HepG2 (cell line): ENCODE measurements at regions of chr3 and their contacts with region 1.

Region 1: GRCh38 chr3:155805802-155806618 is at the start of gene C3orf33:
- DNase-seq: peak; percentile 30
- ATAC-seq: peak; percentile 93
- H3K4me3 ChIP-seq: peak within 1 kb of the TSS; percentile 87 to 95 (median 94)
- H3K27ac ChIP-seq: peak within 1 kb of the TSS; percentile 89
- H3K4me1 ChIP-seq: peaks cover 18% of the 10 kb centered on the region
- H3K27me3 ChIP-seq: no peaks in the 10 kb centered on the region
- CTCF ChIP-seq: peak; percentile 89
- EP300 ChIP-seq: peak in 1 of 2 experiments; percentile 3; a peak in 1 of 4 replicates
- POLR2A ChIP-seq: peak; percentile 5 to 44; a peak in 1 of 4 replicates
- RAD21 ChIP-seq: peak; percentile 86
- total RNA-seq, gene C3orf33: 8.2 and 12.6 TPM in 2 replicates

Region 2: GRCh38 chr3:155270485-155271342 is 535.3 kb before region 1 on chr3:
- CTCF ChIA-PET with region 1: no interaction called
- POLR2A ChIA-PET with region 1: no interaction called
- in situ Hi-C with region 1: no loop called
- intact Hi-C with region 1: no loop called
- DNase-seq: no peak
- ATAC-seq: no peak
- H3K4me3 ChIP-seq: no peak overlapping the region
- H3K27ac ChIP-seq: no peak overlapping the region
- H3K4me1 ChIP-seq: no peaks in the 10 kb centered on the region
- H3K27me3 ChIP-seq: no peaks in the 10 kb centered on the region
- CTCF ChIP-seq: no peak
- EP300 ChIP-seq: no peak
- POLR2A ChIP-seq: no peak
- RAD21 ChIP-seq: no peak

Region 3: GRCh38 chr3:155737844-155738460 is 68.1 kb before region 1 on chr3:
- CTCF ChIA-PET with region 1: no interaction called
- POLR2A ChIA-PET with region 1: interaction called, 10 read pairs
- in situ Hi-C with region 1: no loop called
- intact Hi-C with region 1: no loop called
- DNase-seq: peak; percentile 90
- ATAC-seq: peak; percentile 99
- H3K4me3 ChIP-seq: peak overlapping the region; percentile 51 to 60 (median 52)
- H3K27ac ChIP-seq: peak overlapping the region; percentile 69
- H3K4me1 ChIP-seq: peaks cover 39% of the 10 kb centered on the region
- H3K27me3 ChIP-seq: no peaks in the 10 kb centered on the region; a peak in 1 of 5 replicates
- CTCF ChIP-seq: 0 out of 2 replicates have a peak, but pooled peaks have one; percentile 23
- EP300 ChIP-seq: no peak
- POLR2A ChIP-seq: peak; percentile 43 to 63; a peak in 3 of 4 replicates
- RAD21 ChIP-seq: no peak

Region 4: DNA sequence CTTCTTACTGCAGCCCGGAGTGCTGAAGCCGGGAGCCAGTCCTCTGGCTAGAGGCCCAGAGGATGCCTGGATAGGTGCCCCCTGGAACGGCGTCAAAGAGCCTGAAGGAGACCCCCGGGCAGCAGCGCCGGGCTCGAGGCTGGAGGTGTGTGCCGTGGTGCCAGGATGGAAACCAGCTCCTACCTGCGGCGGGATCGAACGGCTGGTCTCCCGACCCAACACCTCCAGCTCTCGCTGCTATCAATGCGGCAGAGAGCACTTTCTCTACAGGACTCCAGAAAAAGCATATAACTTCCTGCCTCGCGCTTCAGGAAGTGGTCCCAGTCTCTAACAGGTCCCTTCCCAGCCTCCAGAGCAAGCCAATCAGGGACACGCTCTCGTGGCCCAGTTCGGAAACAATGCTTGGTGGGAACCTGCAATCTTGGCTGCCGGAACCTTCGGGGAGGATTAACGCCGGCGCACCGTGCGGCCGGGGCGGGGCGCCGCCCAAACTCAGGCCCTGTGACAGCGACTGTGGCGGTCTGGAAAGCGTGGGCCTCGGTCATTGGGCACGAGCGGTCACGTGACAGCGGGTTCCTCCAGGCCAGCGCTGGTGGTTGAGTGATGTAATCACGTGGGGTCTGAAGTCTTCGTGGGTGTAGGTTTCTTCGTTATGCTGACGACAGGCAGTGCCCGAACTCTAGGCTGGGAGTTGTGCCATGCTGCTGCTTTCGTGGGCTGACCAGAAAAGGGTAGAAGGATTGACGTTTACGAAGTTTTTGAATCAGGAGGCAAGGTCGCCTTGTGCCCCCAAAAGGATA is 48.3 kb after region 1 on chr3 and contains the start of gene SLC33A1:
- CTCF ChIA-PET with region 1: no interaction called
- POLR2A ChIA-PET with region 1: interaction called, 23 read pairs
- in situ Hi-C with region 1: no loop called
- intact Hi-C with region 1: loop called (anchors 1 kb)
- DNase-seq: peak; percentile 98
- ATAC-seq: peak; percentile 98
- H3K4me3 ChIP-seq: peak within 1 kb of the TSS; percentile 78 to 98 (median 89)
- H3K27ac ChIP-seq: peak within 1 kb of the TSS; percentile 97
- H3K4me1 ChIP-seq: peaks cover 35% of the 10 kb centered on the region
- H3K27me3 ChIP-seq: no peaks in the 10 kb centered on the region; a peak in 1 of 5 replicates
- CTCF ChIP-seq: peak; percentile 22
- EP300 ChIP-seq: peak in 1 of 2 experiments; percentile 61; a peak in 1 of 4 replicates
- POLR2A ChIP-seq: peak; percentile 86 to 94
- RAD21 ChIP-seq: peak; percentile 33; the same call in 1 of the 2 replicates
- total RNA-seq, gene SLC33A1: 23.2 and 32.1 TPM in 2 replicates

Region 5: GRCh38 chr3:155859859-155860258 is 53.8 kb after region 1 on chr3:
- CTCF ChIA-PET with region 1: no interaction called
- POLR2A ChIA-PET with region 1: interaction called, 9 read pairs
- in situ Hi-C with region 1: loop called (anchors 5 kb)
- intact Hi-C with region 1: no loop called
- DNase-seq: peak; percentile 44
- ATAC-seq: peak; percentile 79
- H3K4me3 ChIP-seq: peak overlapping the region in 2 of 3 experiments; percentile 29 to 42; a peak in 3 of 6 replicates
- H3K27ac ChIP-seq: no peak overlapping the region
- H3K4me1 ChIP-seq: peaks cover 28% of the 10 kb centered on the region
- H3K27me3 ChIP-seq: no peaks in the 10 kb centered on the region
- CTCF ChIP-seq: peak; percentile 54
- EP300 ChIP-seq: no peak
- POLR2A ChIP-seq: no peak
- RAD21 ChIP-seq: no peak